ENCODE measurements at regions of chr1 and their contacts with region 1.

Region 1: DNA sequence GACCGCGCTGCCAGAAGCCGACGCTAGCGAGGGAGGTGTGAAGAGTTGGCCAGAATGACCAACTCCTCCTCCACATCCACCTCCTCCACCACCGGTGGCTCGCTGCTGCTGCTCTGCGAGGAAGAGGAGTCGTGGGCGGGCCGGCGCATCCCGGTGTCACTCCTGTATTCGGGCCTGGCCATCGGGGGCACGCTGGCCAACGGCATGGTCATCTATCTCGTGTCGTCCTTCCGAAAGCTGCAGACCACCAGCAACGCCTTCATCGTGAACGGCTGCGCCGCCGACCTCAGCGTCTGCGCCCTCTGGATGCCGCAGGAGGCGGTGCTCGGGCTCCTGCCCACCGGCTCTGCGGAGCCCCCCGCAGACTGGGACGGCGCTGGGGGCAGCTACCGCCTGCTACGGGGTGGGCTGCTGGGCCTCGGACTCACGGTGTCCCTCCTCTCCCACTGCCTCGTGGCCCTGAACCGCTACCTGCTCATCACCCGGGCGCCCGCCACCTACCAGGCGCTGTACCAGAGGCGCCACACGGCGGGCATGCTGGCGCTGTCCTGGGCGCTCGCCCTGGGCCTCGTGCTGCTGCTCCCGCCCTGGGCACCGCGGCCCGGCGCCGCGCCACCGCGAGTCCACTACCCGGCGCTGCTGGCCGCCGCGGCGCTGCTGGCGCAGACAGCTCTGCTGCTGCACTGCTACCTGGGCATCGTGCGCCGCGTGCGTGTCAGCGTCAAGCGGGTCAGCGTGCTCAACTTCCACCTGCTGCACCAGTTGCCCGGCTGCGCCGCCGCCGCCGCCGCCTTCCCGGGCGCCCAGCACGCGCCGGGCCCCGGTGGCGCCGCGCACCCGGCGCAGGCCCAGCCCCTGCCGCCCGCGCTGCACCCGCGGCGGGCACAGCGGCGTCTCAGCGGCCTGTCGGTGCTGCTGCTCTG is 1.2 kb downstream of the GPR88 start:
- DNase-seq: peak; percentile 32
- H3K4me3 ChIP-seq: peak overlapping the region; percentile 28 to 44 (median 38)
- H3K27ac ChIP-seq: no peak overlapping the region
- H3K4me1 ChIP-seq: peaks cover 15% of the 10 kb centered on the region
- H3K27me3 ChIP-seq: peaks cover 0 to 7% of the 10 kb centered on the region in 2 experiments
- CTCF ChIP-seq: peak; percentile 17 to 49
- POLR2A ChIP-seq: no peak

Region 2: DNA sequence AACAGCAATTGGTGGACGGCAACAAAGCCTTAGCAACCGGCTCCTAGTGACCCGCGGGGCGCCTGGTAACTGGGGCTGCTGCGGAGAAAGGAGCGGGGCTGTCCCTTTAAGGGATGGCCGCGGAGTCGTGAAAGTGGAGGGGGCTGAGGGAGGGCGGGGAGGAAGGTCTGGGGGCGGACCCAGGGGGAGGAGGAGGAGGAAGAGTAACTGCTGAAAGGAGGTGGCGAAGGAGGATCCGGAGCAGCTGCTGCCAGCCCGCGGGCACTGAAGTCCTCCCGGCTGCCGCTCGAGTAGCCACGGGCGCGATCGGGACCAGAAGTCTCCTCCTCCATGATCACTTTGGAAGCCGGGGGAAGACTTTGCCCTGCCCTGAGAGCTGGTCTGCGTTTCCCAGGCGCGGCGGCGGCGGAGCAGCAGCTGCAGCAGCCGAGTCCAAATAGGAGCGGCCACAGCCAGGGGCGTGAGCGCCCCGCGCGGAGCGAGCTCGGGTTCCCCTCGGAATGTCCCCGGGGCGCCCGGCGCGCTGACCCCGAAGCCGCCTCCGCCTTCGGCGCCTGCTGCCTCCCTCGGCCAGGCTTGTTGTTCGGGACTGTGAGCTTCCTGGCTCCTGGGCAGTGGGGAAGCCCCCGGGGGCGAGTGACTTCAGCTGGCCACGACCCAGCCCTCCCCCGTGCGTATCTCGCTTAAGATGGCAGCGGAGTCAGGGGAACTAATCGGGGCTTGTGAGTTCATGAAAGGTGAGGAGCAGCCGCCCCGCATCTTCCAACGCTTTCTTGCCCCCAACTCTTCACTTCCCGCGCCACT is 186.7 kb before region 1 on chr1 and contains the start of gene CDC14A:
- CTCF ChIA-PET with region 1: no interaction called
- POLR2A ChIA-PET with region 1: no interaction called
- dilution Hi-C with region 1: no loop called
- intact Hi-C with region 1: no loop called
- DNase-seq: peak; percentile 97
- H3K4me3 ChIP-seq: peak within 1 kb of the TSS; percentile 77 to 97 (median 84)
- H3K27ac ChIP-seq: peak within 1 kb of the TSS; percentile 84
- H3K4me1 ChIP-seq: peaks cover 31% of the 10 kb centered on the region
- H3K27me3 ChIP-seq: no peaks in the 10 kb centered on the region
- CTCF ChIP-seq: no peak
- POLR2A ChIP-seq: peak; percentile 85
- total RNA-seq, gene CDC14A: 13.8 and 13.9 TPM in 2 replicates

Region 3: DNA sequence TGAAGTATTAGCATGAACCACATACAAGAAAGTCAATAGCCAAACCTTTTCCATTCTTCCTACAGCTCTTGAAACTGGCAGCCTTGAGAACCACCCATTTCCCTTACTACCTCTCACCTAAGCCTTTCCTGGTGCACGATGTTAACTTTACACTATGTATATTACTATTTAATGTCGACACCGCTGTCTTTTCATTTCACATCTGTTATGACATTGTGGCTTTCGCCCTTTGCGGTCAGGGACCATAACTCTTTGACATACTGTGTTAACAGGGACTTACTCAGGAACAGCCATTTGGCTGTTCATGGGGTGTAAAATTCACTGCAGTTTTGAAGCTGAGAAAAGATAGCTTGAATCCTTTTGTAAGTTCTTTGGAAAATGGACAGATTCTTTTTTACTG is 22.3 kb before region 1 on chr1:
- CTCF ChIA-PET with region 1: no interaction called
- POLR2A ChIA-PET with region 1: no interaction called
- dilution Hi-C with region 1: no loop called
- intact Hi-C with region 1: no loop called
- DNase-seq: no peak
- H3K4me3 ChIP-seq: no peak overlapping the region
- H3K27ac ChIP-seq: no peak overlapping the region
- H3K4me1 ChIP-seq: no peaks in the 10 kb centered on the region
- H3K27me3 ChIP-seq: no peaks in the 10 kb centered on the region
- CTCF ChIP-seq: no peak
- POLR2A ChIP-seq: no peak

Region 4: GRCh38 chr1:100528871-100529270 is 10.3 kb before region 1 on chr1:
- CTCF ChIA-PET with region 1: interaction called, 10 read pairs
- POLR2A ChIA-PET with region 1: no interaction called
- dilution Hi-C with region 1: no loop called
- intact Hi-C with region 1: no loop called
- DNase-seq: peak; percentile 40
- H3K4me3 ChIP-seq: no peak overlapping the region
- H3K27ac ChIP-seq: no peak overlapping the region
- H3K4me1 ChIP-seq: no peaks in the 10 kb centered on the region
- H3K27me3 ChIP-seq: no peaks in the 10 kb centered on the region
- CTCF ChIP-seq: no peak
- POLR2A ChIP-seq: no peak

Region 5: GRCh38 chr1:100642826-100643225 is 103.7 kb after region 1 on chr1:
- CTCF ChIA-PET with region 1: no interaction called
- POLR2A ChIA-PET with region 1: no interaction called
- dilution Hi-C with region 1: no loop called
- intact Hi-C with region 1: no loop called
- DNase-seq: peak; percentile 41
- H3K4me3 ChIP-seq: no peak overlapping the region
- H3K27ac ChIP-seq: no peak overlapping the region
- H3K4me1 ChIP-seq: peaks cover 7% of the 10 kb centered on the region
- H3K27me3 ChIP-seq: no peaks in the 10 kb centered on the region
- CTCF ChIP-seq: no peak
- POLR2A ChIP-seq: no peak